Aorta (tissue), 5 donors: ENCODE measurements at regions of chr17 and their contacts with region 1.

Region 1: GRCh38 chr17:52011070-52011469 is 147.4 kb downstream of the CA10 start:
- DNase-seq: no peak
- ATAC-seq: no peak
- H3K4me3 ChIP-seq: no peak overlapping the region
- H3K27ac ChIP-seq: no peak overlapping the region
- H3K4me1 ChIP-seq: no peaks in the 10 kb centered on the region
- H3K27me3 ChIP-seq: no peaks in the 10 kb centered on the region

Region 2: GRCh38 chr17:52036416-52036815 is 25.3 kb after region 1 on chr17:
- intact Hi-C with region 1: loop called in 1 of 2 experiments (anchors 2 kb)
- DNase-seq: no peak
- ATAC-seq: no peak
- H3K4me3 ChIP-seq: no peak overlapping the region
- H3K27ac ChIP-seq: no peak overlapping the region
- H3K4me1 ChIP-seq: no peaks in the 10 kb centered on the region
- H3K27me3 ChIP-seq: no peaks in the 10 kb centered on the region